Sigmoid colon (tissue), 7 donors: ENCODE measurements at regions of chr2 and their contacts with region 1.

Region 1: GRCh38 chr2:216692636-216693413 is 2.5 kb downstream of the IGFBP5 start:
- DNase-seq: peak; percentile 97
- H3K4me3 ChIP-seq: peak overlapping the region; percentile 59 to 85 (median 78)
- H3K27ac ChIP-seq: peak overlapping the region; percentile 85 to 93 (median 92)
- H3K4me1 ChIP-seq: peaks cover 0 to 79% (median 55%) of the 10 kb centered on the region in 4 donors
- H3K27me3 ChIP-seq: no peaks in the 10 kb centered on the region
- CTCF ChIP-seq: no peak
- EP300 ChIP-seq: no peak
- POLR2A ChIP-seq: no peak

Region 2: DNA sequence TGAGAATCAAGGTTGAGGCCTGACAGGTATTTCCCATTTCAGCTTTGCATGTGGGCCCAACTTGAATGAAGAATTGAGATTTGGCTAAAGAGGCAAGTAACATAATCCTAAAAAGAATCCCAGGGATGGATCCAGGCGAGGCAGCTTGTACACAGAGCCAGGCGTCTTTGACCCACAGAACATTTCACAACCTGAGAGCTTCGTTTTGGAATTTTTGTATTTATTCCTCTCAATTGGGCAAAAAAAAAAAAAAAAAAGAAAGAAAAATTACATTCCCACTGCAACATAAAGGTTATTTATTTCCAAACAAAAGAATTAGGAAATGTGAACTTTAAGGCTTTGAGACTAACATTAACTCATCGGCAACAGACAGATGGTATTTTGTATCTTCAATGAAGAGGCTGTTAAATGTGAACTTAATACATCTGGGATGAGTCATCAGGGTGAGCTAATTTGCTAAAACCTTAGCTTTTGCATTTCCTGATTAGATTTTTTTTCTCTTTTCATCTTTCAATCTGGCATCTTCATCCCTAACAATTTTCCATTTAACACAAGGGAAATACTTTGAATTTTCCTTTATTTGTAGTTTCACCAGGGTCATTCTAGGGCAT is 645.6 kb after region 1 on chr2:
- intact Hi-C with region 1: loop called (anchors 5 kb)
- DNase-seq: peak; percentile 78
- H3K4me3 ChIP-seq: no peak overlapping the region
- H3K27ac ChIP-seq: peak overlapping the region; percentile 39 to 67 (median 59)
- H3K4me1 ChIP-seq: peaks cover 0 to 27% (median 15%) of the 10 kb centered on the region in 4 donors
- H3K27me3 ChIP-seq: no peaks in the 10 kb centered on the region
- CTCF ChIP-seq: no peak
- EP300 ChIP-seq: no peak
- POLR2A ChIP-seq: no peak

Region 3: GRCh38 chr2:217402761-217403383 is 710.0 kb after region 1 on chr2:
- intact Hi-C with region 1: loop called (anchors 5 kb)
- DNase-seq: peak; percentile 89
- H3K4me3 ChIP-seq: no peak overlapping the region
- H3K27ac ChIP-seq: peak overlapping the region; percentile 72 to 85 (median 77)
- H3K4me1 ChIP-seq: peaks cover 0 to 32% (median 29%) of the 10 kb centered on the region in 4 donors
- H3K27me3 ChIP-seq: no peaks in the 10 kb centered on the region
- CTCF ChIP-seq: no peak
- EP300 ChIP-seq: peak in 1 of 4 donors; percentile 7
- POLR2A ChIP-seq: no peak

Region 4: GRCh38 chr2:217434181-217434975 is 741.6 kb after region 1 on chr2:
- intact Hi-C with region 1: loop called (anchors 5 kb)
- DNase-seq: peak; percentile 98
- H3K4me3 ChIP-seq: peak overlapping the region in 2 of 4 donors; percentile 5 to 25
- H3K27ac ChIP-seq: peak overlapping the region; percentile 74 to 83 (median 80)
- H3K4me1 ChIP-seq: peaks cover 2 to 86% (median 85%) of the 10 kb centered on the region in 4 donors
- H3K27me3 ChIP-seq: no peaks in the 10 kb centered on the region
- CTCF ChIP-seq: no peak
- EP300 ChIP-seq: no peak
- POLR2A ChIP-seq: no peak

Region 5: DNA sequence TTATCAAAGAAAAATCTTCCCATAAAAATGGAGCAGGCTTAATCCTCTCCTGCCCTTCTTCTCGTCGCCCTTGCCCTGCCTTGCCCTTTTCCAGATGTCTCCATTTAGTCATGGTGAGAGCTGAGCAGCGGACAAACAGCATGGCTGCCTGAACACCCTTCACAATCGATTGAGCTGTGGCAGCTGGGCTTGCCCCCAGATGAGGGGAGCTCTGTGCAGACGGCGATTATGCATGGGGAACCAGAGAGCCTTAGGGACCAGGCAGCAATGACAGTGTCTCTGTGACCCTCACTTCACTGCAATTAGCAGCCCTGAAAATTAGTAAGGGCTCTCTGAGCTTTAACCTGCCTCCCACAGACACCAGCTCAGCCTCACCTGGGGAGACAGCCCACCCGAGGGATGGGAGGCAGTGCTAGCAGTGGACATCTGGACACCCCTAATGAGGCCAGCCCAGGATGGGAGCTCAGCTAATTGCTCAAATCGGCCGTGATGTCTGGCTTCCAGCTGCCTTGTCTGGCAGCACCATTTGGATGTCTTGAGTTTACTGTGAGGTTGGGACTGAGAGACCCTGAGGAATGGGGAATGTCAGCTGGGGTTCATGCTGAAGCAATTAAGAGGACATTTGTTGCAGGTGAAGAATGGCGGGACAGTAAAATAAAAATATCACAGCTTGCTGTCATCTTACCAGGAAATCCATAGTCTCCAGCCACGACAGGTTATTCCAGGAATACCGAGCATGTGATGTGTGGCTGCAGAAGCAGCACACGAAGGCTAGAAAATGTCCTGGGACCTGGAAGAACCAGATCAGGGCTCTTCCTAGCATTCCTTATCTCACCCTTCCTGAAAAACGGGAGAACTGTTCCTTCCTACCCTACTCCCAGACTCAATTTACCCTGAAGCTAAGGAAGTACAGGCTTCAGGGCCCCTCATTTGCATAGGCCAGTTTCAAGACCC is 944.4 kb after region 1 on chr2:
- intact Hi-C with region 1: loop called (anchors 5 kb)
- DNase-seq: no peak
- H3K4me3 ChIP-seq: no peak overlapping the region
- H3K27ac ChIP-seq: peak overlapping the region in 1 of 4 donors; percentile 4
- H3K4me1 ChIP-seq: peaks cover 0 to 47% (median 32%) of the 10 kb centered on the region in 4 donors
- H3K27me3 ChIP-seq: no peaks in the 10 kb centered on the region
- CTCF ChIP-seq: no peak
- EP300 ChIP-seq: no peak
- POLR2A ChIP-seq: no peak